ENCODE measurements at regions of chr2 and their contacts with region 1.

Region 1: DNA sequence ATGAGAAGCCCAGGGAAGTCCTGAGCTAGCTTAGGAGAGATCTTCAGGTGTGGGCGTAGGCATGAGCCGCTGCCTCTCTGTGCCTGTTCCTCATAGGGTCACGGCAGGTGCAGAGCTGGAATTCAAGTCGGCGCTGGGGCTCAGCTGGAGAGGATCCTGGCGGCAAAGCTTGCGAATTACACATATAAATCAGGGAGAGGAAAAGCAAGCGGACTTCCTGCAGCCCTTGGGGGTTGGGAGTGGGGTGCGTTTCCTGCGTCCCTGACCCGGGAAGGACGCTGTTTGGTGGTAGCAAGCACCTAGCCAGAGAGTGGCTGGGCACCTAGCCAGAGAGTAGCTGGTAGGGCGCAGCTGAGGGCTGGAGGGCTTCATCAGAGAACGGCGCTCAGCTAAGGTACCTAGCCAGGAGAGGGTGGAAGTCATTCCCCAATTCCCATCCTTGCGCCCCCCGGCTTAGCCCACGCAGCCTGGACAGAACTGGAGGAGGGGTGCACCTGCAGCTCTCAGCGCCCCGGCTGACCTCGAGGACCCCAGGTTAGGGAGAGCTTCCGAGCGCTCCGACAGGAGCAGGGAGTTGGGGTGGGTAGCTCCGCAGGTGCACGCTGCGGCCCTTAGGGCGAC is 459 bp upstream of the EFR3B start:
- DNase-seq: no peak
- CTCF ChIP-seq: no peak

Region 2: DNA sequence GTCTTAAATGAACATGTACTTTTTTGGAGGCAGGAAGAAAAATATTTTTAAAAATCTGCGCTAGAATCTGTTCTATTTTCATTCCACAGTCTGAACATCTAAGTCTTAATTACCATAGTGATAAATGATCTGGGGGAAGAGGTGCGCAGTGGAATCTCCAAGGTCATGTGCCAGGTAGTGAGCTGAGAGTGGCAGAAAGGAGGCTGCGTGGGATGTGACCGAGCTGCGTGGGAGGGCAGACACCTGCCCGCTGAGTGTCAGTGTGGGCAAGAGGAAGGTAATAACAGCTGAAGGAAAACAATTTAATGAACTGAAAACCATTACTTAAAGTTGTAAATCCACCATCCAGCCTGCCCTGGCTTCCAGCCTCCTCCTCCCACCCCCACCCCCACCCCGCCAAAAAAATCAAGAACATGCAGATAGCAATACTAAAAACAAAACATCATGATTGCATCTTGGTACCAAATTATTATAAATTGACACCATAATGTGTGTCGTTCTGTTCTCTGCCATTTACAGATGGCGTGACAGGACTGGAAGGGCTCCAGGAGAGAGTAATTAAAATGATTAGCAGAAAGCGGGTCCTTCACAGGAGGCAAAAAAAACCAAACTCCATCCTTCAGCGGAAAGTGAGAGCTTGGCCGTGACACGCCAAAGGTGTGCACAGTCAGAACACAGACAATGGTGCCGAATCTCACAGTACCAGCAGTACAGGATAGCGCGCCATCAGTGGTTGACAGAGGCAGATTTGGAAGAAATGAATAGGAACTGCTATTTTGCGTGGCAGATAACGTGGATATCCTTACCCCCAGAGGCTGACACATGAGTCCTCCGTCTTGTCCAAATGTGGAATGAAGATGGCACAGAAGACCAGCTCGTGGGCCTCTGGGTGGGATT is 643.4 kb after region 1 on chr2:
- CTCF ChIA-PET with region 1: no interaction called
- POLR2A ChIA-PET with region 1: interaction called, 13 read pairs
- DNase-seq: no peak
- CTCF ChIP-seq: no peak